PC-3 (cell line): ENCODE measurements at regions of chr1 and their contacts with region 1.

Region 1: GRCh38 chr1:9428601-9429341 is 110.5 kb upstream of the SLC25A33 start:
- DNase-seq: peak; percentile 99
- ATAC-seq: peak; percentile 95
- H3K4me3 ChIP-seq: peak overlapping the region; percentile 60
- H3K27ac ChIP-seq: no peak overlapping the region
- H3K4me1 ChIP-seq: peaks cover 13% of the 10 kb centered on the region
- H3K27me3 ChIP-seq: no peaks in the 10 kb centered on the region
- CTCF ChIP-seq: no peak

Region 2: DNA sequence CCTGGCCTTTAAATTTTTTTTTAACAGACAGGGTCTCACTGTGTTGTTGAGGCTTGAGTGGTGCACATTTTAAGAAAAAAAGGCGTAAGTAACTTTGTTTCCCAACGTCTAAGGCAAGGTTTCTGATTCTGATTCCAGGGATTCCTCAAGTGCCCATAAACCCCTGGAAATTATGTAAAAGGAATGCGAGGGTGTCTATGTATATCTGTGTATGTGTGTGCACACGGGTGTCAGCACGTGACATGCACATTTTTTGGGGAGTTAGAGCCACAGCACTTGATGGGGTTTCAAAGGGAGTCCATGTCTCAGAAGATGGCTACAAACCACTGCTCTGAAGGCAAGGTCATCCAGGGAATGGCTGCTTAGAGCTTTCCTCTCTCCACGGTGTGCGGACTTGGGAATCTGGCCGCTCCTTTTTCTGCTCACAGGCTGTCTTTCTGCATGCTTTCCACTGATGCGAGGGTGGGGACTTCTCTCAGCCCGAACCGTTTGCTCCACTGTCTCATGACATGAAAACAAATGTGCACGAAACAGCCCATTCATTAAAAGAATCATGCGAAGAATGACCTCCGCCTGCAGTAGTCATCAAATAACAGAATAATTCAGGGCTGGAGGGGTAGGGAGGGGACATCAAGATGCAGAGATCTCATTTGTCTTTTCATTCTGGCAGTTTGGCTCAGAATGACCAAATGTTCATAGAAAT is 592.7 kb before region 1 on chr1:
- CTCF ChIA-PET with region 1: no interaction called
- POLR2A ChIA-PET with region 1: no interaction called
- intact Hi-C with region 1: no loop called
- DNase-seq: no peak
- ATAC-seq: no peak
- H3K4me3 ChIP-seq: no peak overlapping the region
- H3K27ac ChIP-seq: no peak overlapping the region
- H3K4me1 ChIP-seq: no peaks in the 10 kb centered on the region
- H3K27me3 ChIP-seq: no peaks in the 10 kb centered on the region
- CTCF ChIP-seq: no peak

Region 3: DNA sequence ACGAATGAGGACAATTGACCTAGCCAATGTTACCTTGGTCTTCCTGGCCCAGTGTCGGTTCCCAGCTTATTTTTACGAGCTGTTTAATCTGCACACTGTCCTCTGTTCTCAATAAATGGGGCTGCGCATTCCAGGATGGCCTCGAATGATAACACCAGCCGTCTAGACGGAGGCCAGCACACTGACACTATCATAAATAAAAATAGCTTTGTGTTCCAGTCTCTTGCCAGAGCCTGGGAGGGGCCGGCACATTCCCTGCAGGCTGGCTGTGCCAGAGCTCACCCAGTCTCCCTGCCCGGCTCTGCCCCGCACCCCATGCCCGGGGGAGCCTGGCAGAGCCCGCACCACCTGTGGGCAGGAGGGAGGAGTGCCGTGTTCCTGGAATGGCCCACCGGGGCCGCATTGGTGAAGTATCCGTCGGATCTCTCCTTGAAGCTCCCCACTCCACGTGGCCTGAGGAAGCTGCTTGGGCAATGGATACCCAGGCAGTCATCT is 44.0 kb before region 1 on chr1:
- CTCF ChIA-PET with region 1: no interaction called
- POLR2A ChIA-PET with region 1: no interaction called
- intact Hi-C with region 1: no loop called
- DNase-seq: no peak
- ATAC-seq: no peak
- H3K4me3 ChIP-seq: no peak overlapping the region
- H3K27ac ChIP-seq: no peak overlapping the region
- H3K4me1 ChIP-seq: peaks cover 6% of the 10 kb centered on the region
- H3K27me3 ChIP-seq: no peaks in the 10 kb centered on the region
- CTCF ChIP-seq: no peak

Region 4: GRCh38 chr1:9402256-9402616 is 26.5 kb before region 1 on chr1:
- CTCF ChIA-PET with region 1: interaction called, 10 read pairs
- POLR2A ChIA-PET with region 1: interaction called, 3 read pairs
- intact Hi-C with region 1: no loop called
- DNase-seq: no peak
- ATAC-seq: no peak
- H3K4me3 ChIP-seq: no peak overlapping the region
- H3K27ac ChIP-seq: no peak overlapping the region
- H3K4me1 ChIP-seq: peaks cover 25% of the 10 kb centered on the region
- H3K27me3 ChIP-seq: no peaks in the 10 kb centered on the region
- CTCF ChIP-seq: no peak

Region 5: GRCh38 chr1:9476790-9477463 is 48.2 kb after region 1 on chr1:
- CTCF ChIA-PET with region 1: no interaction called
- POLR2A ChIA-PET with region 1: no interaction called
- intact Hi-C with region 1: no loop called
- DNase-seq: peak; percentile 80
- ATAC-seq: peak; percentile 57
- H3K4me3 ChIP-seq: no peak overlapping the region
- H3K27ac ChIP-seq: peak overlapping the region; percentile 48
- H3K4me1 ChIP-seq: peaks cover 25% of the 10 kb centered on the region
- H3K27me3 ChIP-seq: no peaks in the 10 kb centered on the region
- CTCF ChIP-seq: no peak